ENCODE measurements at regions of chr2 and their contacts with region 1.

Region 1: GRCh38 chr2:86440631-86441391 is at the start of gene KDM3A:
- DNase-seq: peak; percentile 99
- H3K4me3 Mint-ChIP-seq: peak within 1 kb of the TSS; percentile 85
- H3K27ac Mint-ChIP-seq: peak within 1 kb of the TSS; percentile 99
- H3K4me1 Mint-ChIP-seq: peaks cover 37% of the 10 kb centered on the region
- H3K27me3 Mint-ChIP-seq: no peaks in the 10 kb centered on the region
- CTCF ChIP-seq: no peak
- total RNA-seq, gene KDM3A: 21.1 and 34.6 TPM in 2 replicates

Region 2: DNA sequence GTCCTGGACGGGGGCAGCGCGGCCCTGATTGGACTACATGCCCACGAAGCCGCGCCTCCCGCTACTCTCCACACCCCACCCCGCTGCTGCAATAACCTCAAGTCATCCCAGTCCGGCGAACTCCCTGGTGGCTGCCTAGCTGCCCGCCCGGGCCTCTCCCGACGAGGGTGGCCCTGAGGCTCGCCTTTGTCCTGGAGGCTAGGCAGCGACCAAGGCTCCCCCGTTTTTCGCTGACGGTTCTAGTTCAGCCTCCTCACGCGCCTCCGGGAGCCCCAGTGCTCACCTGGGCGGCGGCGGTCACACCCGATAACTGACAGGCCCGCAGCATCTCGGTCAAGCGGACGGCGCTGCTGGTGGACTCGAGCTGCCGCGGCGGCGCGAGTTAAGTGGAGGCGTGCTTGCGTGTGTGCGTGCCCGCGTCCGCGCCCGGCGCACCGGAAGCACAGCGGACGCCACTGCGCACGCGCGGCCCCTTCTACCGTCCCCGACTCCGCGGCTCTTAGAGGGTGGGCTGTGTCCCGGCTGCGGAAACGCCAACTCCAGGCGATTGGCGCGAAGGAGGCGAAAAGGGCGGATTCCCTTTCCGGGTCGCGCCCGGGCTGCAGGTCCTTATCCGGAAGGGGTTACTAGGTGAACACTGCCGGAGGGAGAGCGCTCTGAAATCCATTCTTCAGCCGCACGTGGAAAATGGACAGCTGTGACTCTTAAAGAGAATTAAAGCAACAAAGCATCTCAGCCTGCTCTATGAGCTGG is 245.6 kb before region 1 on chr2 and contains the start of gene IMMT:
- CTCF ChIA-PET with region 1: interaction called, 3 read pairs
- POLR2A ChIA-PET with region 1: interaction called, 118 read pairs
- intact Hi-C with region 1: no loop called
- DNase-seq: peak; percentile 96
- H3K4me3 Mint-ChIP-seq: peak within 1 kb of the TSS; percentile 95
- H3K27ac Mint-ChIP-seq: peak within 1 kb of the TSS; percentile 98
- H3K4me1 Mint-ChIP-seq: peaks cover 14% of the 10 kb centered on the region
- H3K27me3 Mint-ChIP-seq: no peaks in the 10 kb centered on the region
- CTCF ChIP-seq: no peak
- total RNA-seq, gene IMMT: 84.6 and 114 TPM in 2 replicates

Region 3: DNA sequence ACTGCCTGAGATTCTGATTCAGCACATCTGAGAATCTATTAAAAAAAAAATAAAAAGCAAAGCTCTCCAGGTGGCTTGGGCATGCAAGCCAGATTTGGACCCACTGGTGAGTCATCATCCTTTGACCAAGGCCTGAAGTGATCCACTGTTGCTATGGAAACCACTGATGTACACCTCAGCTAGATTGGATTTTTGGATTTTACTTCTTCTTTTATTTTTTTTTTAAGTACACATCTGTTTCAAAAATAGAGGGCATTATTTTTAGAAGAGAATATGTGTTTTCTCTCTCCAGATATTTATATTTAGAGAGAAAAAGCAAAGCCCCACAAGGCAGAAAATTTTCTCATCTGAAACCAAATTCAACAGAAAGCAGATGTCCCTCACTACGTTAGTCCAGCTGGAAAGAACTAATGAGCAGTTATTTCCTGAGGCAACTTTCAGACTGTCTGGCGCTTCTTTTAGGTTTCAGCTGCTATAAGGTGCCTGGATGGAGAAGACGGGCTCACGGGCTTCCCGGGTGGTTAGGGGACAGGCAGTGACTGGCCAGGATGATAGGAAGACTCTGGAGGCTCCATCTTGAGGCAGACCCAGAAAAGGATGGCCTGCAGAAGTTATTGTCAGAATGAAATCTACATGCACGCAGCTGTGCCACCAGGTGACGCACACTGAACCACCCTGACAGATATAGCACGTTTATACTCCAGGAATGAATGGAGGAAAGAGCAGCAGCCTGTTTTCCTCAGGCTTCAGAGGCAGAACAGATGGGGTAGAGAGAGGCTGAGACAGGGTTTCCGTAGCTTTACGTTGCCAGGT is 191.0 kb before region 1 on chr2:
- CTCF ChIA-PET with region 1: no interaction called
- POLR2A ChIA-PET with region 1: no interaction called
- intact Hi-C with region 1: no loop called
- DNase-seq: peak; percentile 65
- H3K4me3 Mint-ChIP-seq: no peak overlapping the region
- H3K27ac Mint-ChIP-seq: peak overlapping the region; percentile 55
- H3K4me1 Mint-ChIP-seq: peaks cover 6% of the 10 kb centered on the region
- H3K27me3 Mint-ChIP-seq: peaks cover 14% of the 10 kb centered on the region
- CTCF ChIP-seq: no peak

Region 4: GRCh38 chr2:86314125-86314524 is 126.7 kb before region 1 on chr2:
- CTCF ChIA-PET with region 1: no interaction called
- POLR2A ChIA-PET with region 1: no interaction called
- intact Hi-C with region 1: no loop called
- DNase-seq: no peak
- H3K4me3 Mint-ChIP-seq: no peak overlapping the region
- H3K27ac Mint-ChIP-seq: no peak overlapping the region
- H3K4me1 Mint-ChIP-seq: no peaks in the 10 kb centered on the region
- H3K27me3 Mint-ChIP-seq: peaks cover 16% of the 10 kb centered on the region
- CTCF ChIP-seq: no peak

Region 5: GRCh38 chr2:86396291-86396785 is 44.5 kb before region 1 on chr2:
- CTCF ChIA-PET with region 1: interaction called, 5 read pairs
- POLR2A ChIA-PET with region 1: interaction called, 19 read pairs
- intact Hi-C with region 1: no loop called
- DNase-seq: peak; percentile 46
- H3K4me3 Mint-ChIP-seq: no peak overlapping the region
- H3K27ac Mint-ChIP-seq: no peak overlapping the region
- H3K4me1 Mint-ChIP-seq: peaks cover 11% of the 10 kb centered on the region
- H3K27me3 Mint-ChIP-seq: no peaks in the 10 kb centered on the region
- CTCF ChIP-seq: no peak

Region 6: DNA sequence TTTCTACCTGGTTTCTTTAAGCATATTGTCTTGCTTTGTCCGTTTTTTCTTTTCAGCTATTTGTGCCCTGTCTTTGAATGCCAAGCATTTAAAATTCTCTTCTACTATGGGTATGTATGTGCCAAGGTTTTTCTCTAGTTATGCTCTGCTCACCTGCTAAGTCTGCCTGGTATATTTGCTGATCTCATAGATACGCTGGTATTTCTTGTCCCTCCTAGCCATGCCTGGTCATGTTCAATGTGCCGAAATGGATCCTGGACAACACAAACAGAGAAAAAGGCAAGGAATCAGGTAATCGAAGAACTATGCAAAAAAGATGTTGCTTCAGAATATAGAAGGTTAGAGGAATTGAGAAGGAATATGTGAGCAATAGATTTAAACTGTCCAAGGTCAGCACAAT is 14.5 kb before region 1 on chr2:
- CTCF ChIA-PET with region 1: no interaction called
- POLR2A ChIA-PET with region 1: interaction called, 32 read pairs
- intact Hi-C with region 1: no loop called
- DNase-seq: no peak
- H3K4me3 Mint-ChIP-seq: no peak overlapping the region
- H3K27ac Mint-ChIP-seq: no peak overlapping the region
- H3K4me1 Mint-ChIP-seq: no peaks in the 10 kb centered on the region
- H3K27me3 Mint-ChIP-seq: peaks cover 28% of the 10 kb centered on the region
- CTCF ChIP-seq: no peak

Region 7: GRCh38 chr2:86476092-86476491 is 35.3 kb after region 1 on chr2:
- CTCF ChIA-PET with region 1: interaction called, 3 read pairs
- POLR2A ChIA-PET with region 1: interaction called, 14 read pairs
- intact Hi-C with region 1: no loop called
- DNase-seq: no peak
- H3K4me3 Mint-ChIP-seq: no peak overlapping the region
- H3K27ac Mint-ChIP-seq: no peak overlapping the region
- H3K4me1 Mint-ChIP-seq: peaks cover 5% of the 10 kb centered on the region
- H3K27me3 Mint-ChIP-seq: no peaks in the 10 kb centered on the region
- CTCF ChIP-seq: no peak

Region 8: DNA sequence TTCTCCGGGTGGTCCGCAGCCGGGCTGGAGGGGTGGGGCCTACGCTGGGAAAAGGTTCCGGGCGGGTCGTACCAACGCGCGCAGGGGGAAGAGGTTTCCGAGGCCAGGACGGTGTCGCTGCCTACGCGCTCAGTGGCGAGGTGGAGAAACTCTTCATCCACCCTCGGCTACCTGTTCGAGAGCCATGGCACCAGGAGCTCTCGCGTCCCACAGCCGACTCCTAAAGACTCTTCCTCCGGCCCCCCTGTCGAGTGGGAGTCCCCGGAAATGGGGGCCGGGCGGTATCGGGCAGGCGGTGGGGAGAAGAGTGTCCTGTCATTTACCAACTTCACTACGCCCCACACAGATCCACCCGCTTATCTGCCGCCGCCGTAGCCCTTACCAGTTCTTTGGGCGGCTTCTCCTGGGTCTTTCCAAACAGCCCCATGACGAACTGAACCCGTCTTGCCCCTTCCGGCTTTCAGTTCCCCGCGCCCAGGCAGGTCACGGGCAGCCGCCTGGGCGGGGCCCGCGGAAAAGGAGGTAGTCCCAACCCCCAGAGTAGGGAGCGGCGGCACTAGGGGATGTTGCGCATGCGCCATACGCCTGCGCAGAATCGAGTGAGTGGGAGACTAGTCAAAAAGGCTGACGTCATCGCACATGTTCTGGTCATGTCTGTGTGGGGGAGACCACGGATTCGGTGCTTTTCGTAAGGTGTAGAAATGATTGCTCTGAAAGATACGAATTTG is 122.3 kb after region 1 on chr2 and contains the start of gene CHMP3:
- CTCF ChIA-PET with region 1: no interaction called
- POLR2A ChIA-PET with region 1: interaction called, 43 read pairs
- intact Hi-C with region 1: loop called (anchors 2 kb)
- DNase-seq: peak; percentile 98
- H3K4me3 Mint-ChIP-seq: peak within 1 kb of the TSS; percentile 94
- H3K27ac Mint-ChIP-seq: peak within 1 kb of the TSS; percentile 100
- H3K4me1 Mint-ChIP-seq: peaks cover 26% of the 10 kb centered on the region
- H3K27me3 Mint-ChIP-seq: no peaks in the 10 kb centered on the region
- CTCF ChIP-seq: no peak
- total RNA-seq, gene CHMP3: 123 and 131 TPM in 2 replicates

Region 9: GRCh38 chr2:86632672-86633651 is 192.2 kb after region 1 on chr2:
- CTCF ChIA-PET with region 1: no interaction called
- POLR2A ChIA-PET with region 1: no interaction called
- intact Hi-C with region 1: no loop called
- DNase-seq: no peak
- H3K4me3 Mint-ChIP-seq: no peak overlapping the region
- H3K27ac Mint-ChIP-seq: no peak overlapping the region
- H3K4me1 Mint-ChIP-seq: no peaks in the 10 kb centered on the region
- H3K27me3 Mint-ChIP-seq: no peaks in the 10 kb centered on the region
- CTCF ChIP-seq: no peak

Region 10: GRCh38 chr2:86704459-86704971 is 263.7 kb after region 1 on chr2:
- CTCF ChIA-PET with region 1: no interaction called
- POLR2A ChIA-PET with region 1: interaction called, 19 read pairs
- intact Hi-C with region 1: no loop called
- DNase-seq: peak; percentile 71
- H3K4me3 Mint-ChIP-seq: peak overlapping the region; percentile 55
- H3K27ac Mint-ChIP-seq: peak overlapping the region; percentile 84
- H3K4me1 Mint-ChIP-seq: peaks cover 19% of the 10 kb centered on the region
- H3K27me3 Mint-ChIP-seq: no peaks in the 10 kb centered on the region
- CTCF ChIP-seq: no peak